ENCODE measurements at regions of chr17 and their contacts with region 1.

Region 1: GRCh38 chr17:6666077-6666521 is 14.5 kb downstream of the C17orf100 start:
- DNase-seq: peak; percentile 70 to 81 (median 77)
- ATAC-seq: peak; percentile 91 to 93
- H3K4me3 ChIP-seq: no peak overlapping the region
- H3K27ac ChIP-seq: no peak overlapping the region
- H3K4me1 ChIP-seq: no peaks in the 10 kb centered on the region
- H3K27me3 ChIP-seq: no peaks in the 10 kb centered on the region

Region 2: GRCh38 chr17:6204203-6204722 is 461.8 kb before region 1 on chr17:
- intact Hi-C with region 1: no loop called
- DNase-seq: no peak
- ATAC-seq: no peak
- H3K4me3 ChIP-seq: no peak overlapping the region
- H3K27ac ChIP-seq: no peak overlapping the region
- H3K4me1 ChIP-seq: no peaks in the 10 kb centered on the region
- H3K27me3 ChIP-seq: no peaks in the 10 kb centered on the region

Region 3: DNA sequence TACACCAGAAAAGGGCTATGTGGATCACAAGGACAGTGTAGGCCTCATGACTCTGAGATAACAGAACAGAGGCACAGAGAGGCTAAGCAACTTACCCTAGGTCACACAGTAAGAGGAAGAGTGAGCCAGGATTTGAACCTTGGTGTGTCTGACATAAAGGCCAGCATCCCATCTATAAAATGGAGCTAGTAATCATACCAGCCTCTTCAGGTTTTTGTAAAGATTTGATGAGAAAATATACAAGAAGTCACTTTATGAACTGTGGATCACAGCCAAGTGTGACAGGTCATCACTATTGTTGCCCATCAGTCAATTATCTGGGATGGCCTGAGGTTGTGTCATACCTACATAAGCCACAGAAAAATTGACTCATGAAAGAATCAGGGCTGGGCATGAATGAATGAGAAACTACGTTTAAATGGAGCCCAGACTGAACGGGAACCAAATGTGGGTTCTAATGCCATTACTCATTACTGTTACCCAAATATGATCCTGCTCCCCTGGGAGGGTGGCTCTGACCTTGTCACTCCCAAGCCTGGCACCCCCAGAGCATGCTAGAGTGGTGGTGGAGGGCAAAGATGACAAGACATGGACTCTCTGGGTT is 130.9 kb after region 1 on chr17:
- intact Hi-C with region 1: loop called in 2 of 4 experiments (anchors 10 kb)
- DNase-seq: no peak
- ATAC-seq: no peak
- H3K4me3 ChIP-seq: no peak overlapping the region
- H3K27ac ChIP-seq: no peak overlapping the region
- H3K4me1 ChIP-seq: no peaks in the 10 kb centered on the region
- H3K27me3 ChIP-seq: no peaks in the 10 kb centered on the region

Region 4: GRCh38 chr17:6831661-6832263 is 165.7 kb after region 1 on chr17 and contains the start of gene TEKT1:
- intact Hi-C with region 1: loop called in 1 of 4 experiments (anchors 10 kb)
- DNase-seq: peak; percentile 79 to 87 (median 84)
- ATAC-seq: peak; percentile 87 to 96
- H3K4me3 ChIP-seq: peak within 1 kb of the TSS; percentile 3
- H3K27ac ChIP-seq: no peak within 1 kb of the TSS
- H3K4me1 ChIP-seq: no peaks in the 10 kb centered on the region
- H3K27me3 ChIP-seq: peaks cover 5% of the 10 kb centered on the region
- total RNA-seq, gene TEKT1: not detected

Region 5: GRCh38 chr17:6843241-6843880 is 177.3 kb after region 1 on chr17:
- intact Hi-C with region 1: loop called in 2 of 4 experiments (anchors 5 to 10 kb)
- DNase-seq: no peak
- ATAC-seq: peak in 1 of 2 donors; percentile 66
- H3K4me3 ChIP-seq: peak overlapping the region; percentile 28
- H3K27ac ChIP-seq: no peak overlapping the region
- H3K4me1 ChIP-seq: no peaks in the 10 kb centered on the region
- H3K27me3 ChIP-seq: no peaks in the 10 kb centered on the region

Region 6: DNA sequence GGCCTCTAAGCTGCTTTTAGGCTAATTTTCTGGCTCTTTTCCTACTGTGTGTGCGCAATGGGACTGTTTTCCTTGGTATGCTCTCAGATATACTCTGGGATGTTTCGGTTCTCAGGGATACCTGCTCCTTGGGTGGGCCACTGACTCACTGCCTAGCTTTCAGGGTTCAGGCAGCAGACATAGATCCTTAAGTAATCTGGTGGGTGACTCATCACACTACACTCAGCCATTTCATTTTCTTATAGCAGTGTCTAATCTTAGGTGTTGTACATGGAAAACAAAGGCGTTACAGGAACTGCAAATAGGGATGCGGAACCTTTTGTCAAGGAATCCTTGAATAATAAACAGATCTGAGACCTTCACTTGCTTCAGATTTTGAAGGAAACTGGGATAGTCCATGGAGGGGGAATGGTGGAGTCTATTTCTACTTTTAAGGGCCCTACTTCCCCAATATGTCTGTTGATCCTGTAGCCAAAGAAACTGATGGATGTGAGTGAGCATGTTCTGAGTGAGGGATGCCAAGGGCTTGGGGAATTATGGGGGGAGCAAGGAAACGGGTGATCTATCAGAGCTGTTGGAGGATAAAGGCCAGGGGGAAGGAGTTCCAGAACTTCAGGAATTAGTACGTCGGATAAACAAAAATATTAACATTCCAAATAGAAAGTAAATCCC is 206.2 kb after region 1 on chr17:
- intact Hi-C with region 1: no loop called
- DNase-seq: no peak
- ATAC-seq: no peak
- H3K4me3 ChIP-seq: no peak overlapping the region
- H3K27ac ChIP-seq: no peak overlapping the region
- H3K4me1 ChIP-seq: no peaks in the 10 kb centered on the region
- H3K27me3 ChIP-seq: no peaks in the 10 kb centered on the region

Region 7: DNA sequence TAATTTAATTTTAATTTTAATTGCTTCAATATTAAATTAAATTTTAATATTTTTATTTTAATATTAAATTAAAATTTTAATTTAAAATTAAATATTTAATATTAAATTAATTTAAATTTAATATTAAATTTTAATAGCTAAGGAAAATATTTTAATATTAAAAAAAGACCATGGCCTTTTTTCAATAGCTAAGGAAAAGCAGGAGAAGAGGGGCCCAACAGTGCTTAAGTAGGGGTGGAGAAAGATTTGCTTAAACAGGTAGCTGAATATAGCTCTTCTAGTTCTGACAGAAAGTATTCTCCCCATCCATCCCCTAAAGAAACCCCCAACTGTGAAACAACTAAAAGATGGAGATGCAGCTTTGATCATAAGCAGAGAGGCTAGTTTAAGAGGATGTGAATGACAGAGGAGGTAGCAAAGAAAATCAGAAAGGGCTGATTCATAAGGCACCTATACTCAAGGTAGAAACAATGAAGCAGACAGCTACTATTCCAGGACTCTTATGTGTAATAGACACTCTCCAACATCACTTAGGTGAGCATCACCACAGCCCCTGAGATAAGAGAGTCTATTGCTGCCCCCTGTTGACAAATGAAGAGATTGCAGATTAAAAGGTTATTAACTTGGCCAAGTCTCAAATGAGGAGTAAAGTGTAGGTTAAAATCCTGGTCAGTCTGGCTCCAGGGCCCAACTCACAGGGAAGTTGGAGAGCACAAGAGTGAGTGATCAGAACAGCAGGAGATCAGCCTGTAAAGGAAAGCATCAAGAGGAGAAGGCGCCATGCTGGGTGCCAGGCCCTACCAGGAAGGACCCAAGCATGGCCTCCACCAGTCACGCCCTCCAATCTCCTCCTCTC is 338.5 kb after region 1 on chr17:
- intact Hi-C with region 1: loop called in 1 of 4 experiments (anchors 10 kb)
- DNase-seq: peak in 1 of 3 donors; percentile 62
- ATAC-seq: peak; percentile 61 to 70
- H3K4me3 ChIP-seq: no peak overlapping the region
- H3K27ac ChIP-seq: no peak overlapping the region
- H3K4me1 ChIP-seq: no peaks in the 10 kb centered on the region
- H3K27me3 ChIP-seq: no peaks in the 10 kb centered on the region